ENCODE measurements at regions of chr7 and their contacts with region 1.

Region 1: GRCh38 chr7:92528188-92528957 is at the starts of genes PEX1 and RBM48:
- DNase-seq: peak; percentile 79 to 98 (median 96)
- ATAC-seq: peak; percentile 96
- H3K4me3 ChIP-seq: peak within 1 kb of the TSS; percentile 95
- H3K4me3 Mint-ChIP-seq: peak within 1 kb of the TSS; percentile 86 to 96 (median 90)
- H3K27ac ChIP-seq: peak within 1 kb of the TSS; percentile 91
- H3K27ac Mint-ChIP-seq: peak within 1 kb of the TSS; percentile 91 to 100 (median 95)
- H3K4me1 ChIP-seq: peaks cover 13 to 23% of the 10 kb centered on the region in 2 donors
- H3K4me1 Mint-ChIP-seq: peaks cover 24 to 67% (median 52%) of the 10 kb centered on the region in 7 donors
- H3K27me3 ChIP-seq: no peaks in the 10 kb centered on the region
- H3K27me3 Mint-ChIP-seq: peaks cover 0 to 2% (median 0%) of the 10 kb centered on the region in 5 donors
- total RNA-seq, gene PEX1: 18.6 to 43.3 (median 25.6) TPM
- total RNA-seq, gene RBM48: 16.9 to 42.7 (median 37.8) TPM

Region 2: DNA sequence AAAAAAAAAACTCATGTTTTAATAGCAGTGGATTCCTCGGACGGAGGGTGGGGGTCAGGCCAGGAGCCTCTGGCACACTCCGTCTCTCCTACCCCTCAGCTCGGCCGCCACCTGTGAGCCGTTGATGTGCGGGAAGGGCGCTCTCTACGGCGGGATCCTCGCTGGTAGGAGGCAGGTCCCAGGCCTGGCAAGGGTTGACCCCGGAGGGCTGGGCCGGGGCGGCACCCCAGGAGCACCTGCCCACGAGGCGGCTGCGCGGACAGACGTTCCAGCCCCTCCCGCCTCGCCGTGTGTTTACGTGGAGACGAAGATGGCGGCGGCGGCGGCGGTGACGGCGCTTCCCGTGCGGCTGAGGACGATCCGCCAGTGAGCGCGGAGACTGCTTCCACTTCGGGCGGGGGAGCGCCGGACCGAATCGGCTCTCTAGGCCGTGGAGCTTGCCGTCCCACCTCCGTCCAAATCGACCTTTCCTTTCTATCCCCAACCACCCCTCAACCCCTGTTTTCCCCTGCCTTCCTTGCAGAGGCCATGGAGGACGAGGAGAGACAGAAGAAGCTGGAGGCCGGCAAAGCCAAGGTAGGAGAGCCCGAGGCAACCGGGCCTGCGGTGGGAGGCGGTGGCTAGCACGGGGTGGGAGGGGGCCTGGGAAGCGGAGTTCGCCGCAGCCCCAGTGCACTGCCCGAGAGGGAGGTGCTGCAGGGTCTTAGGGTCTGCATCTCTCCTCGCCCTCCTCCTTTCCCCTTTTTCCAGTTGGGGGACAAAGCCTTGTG is 587.6 kb before region 1 on chr7 and contains the start of gene AKAP9:
- CTCF ChIA-PET with region 1: no interaction called
- POLR2A ChIA-PET with region 1: no interaction called
- intact Hi-C with region 1: loop called (anchors 1 kb)
- DNase-seq: peak; percentile 79 to 89 (median 88)
- ATAC-seq: peak; percentile 93
- H3K4me3 ChIP-seq: peak within 1 kb of the TSS; percentile 97
- H3K4me3 Mint-ChIP-seq: peak within 1 kb of the TSS; percentile 85 to 98 (median 92)
- H3K27ac ChIP-seq: peak within 1 kb of the TSS; percentile 93
- H3K27ac Mint-ChIP-seq: peak within 1 kb of the TSS; percentile 90 to 98 (median 95)
- H3K4me1 ChIP-seq: peaks cover 15 to 16% of the 10 kb centered on the region in 2 donors
- H3K4me1 Mint-ChIP-seq: peaks cover 28 to 54% (median 44%) of the 10 kb centered on the region in 7 donors
- H3K27me3 ChIP-seq: no peaks in the 10 kb centered on the region
- H3K27me3 Mint-ChIP-seq: peaks cover 0 to 2% (median 0%) of the 10 kb centered on the region in 5 donors
- total RNA-seq, gene AKAP9: 50.0 to 93.5 (median 66.1) TPM

Region 3: GRCh38 chr7:92447345-92448204 is 80.8 kb before region 1 on chr7 and contains the start of gene GATAD1:
- CTCF ChIA-PET with region 1: interaction called, 8 read pairs
- POLR2A ChIA-PET with region 1: interaction called, 27 read pairs
- intact Hi-C with region 1: loop called (anchors 1 kb)
- DNase-seq: peak in 7 of 9 donors; percentile 64 to 87 (median 84)
- ATAC-seq: peak; percentile 89
- H3K4me3 ChIP-seq: peak within 1 kb of the TSS; percentile 63
- H3K4me3 Mint-ChIP-seq: peak within 1 kb of the TSS; percentile 81 to 97 (median 93)
- H3K27ac ChIP-seq: peak within 1 kb of the TSS; percentile 95
- H3K27ac Mint-ChIP-seq: peak within 1 kb of the TSS; percentile 95 to 99 (median 98)
- H3K4me1 ChIP-seq: peaks cover 9 to 14% of the 10 kb centered on the region in 2 donors
- H3K4me1 Mint-ChIP-seq: peaks cover 6 to 38% (median 17%) of the 10 kb centered on the region in 7 donors
- H3K27me3 ChIP-seq: no peaks in the 10 kb centered on the region
- H3K27me3 Mint-ChIP-seq: peaks cover 0 to 3% (median 0%) of the 10 kb centered on the region in 5 donors
- total RNA-seq, gene GATAD1: 16.4 to 34.7 (median 22.7) TPM

Region 4: DNA sequence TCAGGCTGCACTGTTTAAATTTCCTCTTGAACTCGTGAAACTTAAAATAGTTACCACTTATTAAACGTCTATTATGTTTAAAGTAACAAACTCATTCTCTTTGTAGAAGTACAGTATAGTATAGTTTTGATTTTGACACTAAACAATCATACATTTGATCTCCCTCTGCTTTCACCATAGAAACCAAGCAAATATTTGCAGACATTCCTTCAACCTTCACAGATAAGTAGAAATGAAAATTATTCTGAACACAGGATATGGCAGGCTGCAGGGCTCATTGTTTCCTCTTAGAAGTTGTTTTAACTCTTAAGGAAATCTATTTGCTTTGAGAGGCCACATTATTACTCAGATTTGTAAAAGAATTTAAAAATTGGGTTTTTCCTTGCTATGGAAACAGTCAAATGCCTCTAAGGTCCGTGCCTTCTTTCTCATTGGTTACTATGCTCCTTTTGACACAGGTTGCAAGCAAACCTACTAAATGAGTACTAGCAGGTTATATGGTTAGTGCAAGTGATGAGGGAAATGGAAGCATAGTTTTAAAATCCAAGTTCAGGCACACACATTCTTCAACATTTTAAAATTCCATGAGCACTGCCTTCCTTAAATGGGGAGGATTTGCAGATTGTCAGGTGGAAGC is 154.6 kb after region 1 on chr7:
- CTCF ChIA-PET with region 1: no interaction called
- POLR2A ChIA-PET with region 1: no interaction called
- intact Hi-C with region 1: loop called (anchors 1 to 5 kb)
- DNase-seq: peak in 7 of 9 donors; percentile 20 to 62 (median 46)
- ATAC-seq: peak; percentile 70
- H3K4me3 ChIP-seq: no peak overlapping the region
- H3K4me3 Mint-ChIP-seq: peak overlapping the region; percentile 22 to 66 (median 58)
- H3K27ac ChIP-seq: peak overlapping the region; percentile 70
- H3K27ac Mint-ChIP-seq: peak overlapping the region; percentile 27 to 87 (median 81)
- H3K4me1 ChIP-seq: peaks cover 32 to 54% of the 10 kb centered on the region in 2 donors
- H3K4me1 Mint-ChIP-seq: peaks cover 51 to 89% (median 86%) of the 10 kb centered on the region in 7 donors
- H3K27me3 ChIP-seq: no peaks in the 10 kb centered on the region
- H3K27me3 Mint-ChIP-seq: no peaks in the 10 kb centered on the region

Region 5: GRCh38 chr7:92727755-92728154 is 199.4 kb after region 1 on chr7:
- CTCF ChIA-PET with region 1: no interaction called
- POLR2A ChIA-PET with region 1: no interaction called
- intact Hi-C with region 1: no loop called
- DNase-seq: no peak
- ATAC-seq: no peak
- H3K4me3 ChIP-seq: no peak overlapping the region
- H3K4me3 Mint-ChIP-seq: no peak overlapping the region
- H3K27ac ChIP-seq: no peak overlapping the region
- H3K27ac Mint-ChIP-seq: no peak overlapping the region
- H3K4me1 ChIP-seq: no peaks in the 10 kb centered on the region
- H3K4me1 Mint-ChIP-seq: peaks cover 13 to 72% (median 20%) of the 10 kb centered on the region in 7 donors
- H3K27me3 ChIP-seq: no peaks in the 10 kb centered on the region
- H3K27me3 Mint-ChIP-seq: no peaks in the 10 kb centered on the region

Region 6: GRCh38 chr7:92797693-92798092 is 269.3 kb after region 1 on chr7:
- CTCF ChIA-PET with region 1: no interaction called
- POLR2A ChIA-PET with region 1: no interaction called
- intact Hi-C with region 1: no loop called
- DNase-seq: peak in 1 of 9 donors; percentile 50
- ATAC-seq: no peak
- H3K4me3 ChIP-seq: no peak overlapping the region
- H3K4me3 Mint-ChIP-seq: no peak overlapping the region
- H3K27ac ChIP-seq: no peak overlapping the region
- H3K27ac Mint-ChIP-seq: no peak overlapping the region
- H3K4me1 ChIP-seq: peaks cover 0 to 3% of the 10 kb centered on the region in 2 donors
- H3K4me1 Mint-ChIP-seq: peaks cover 0 to 38% (median 19%) of the 10 kb centered on the region in 7 donors
- H3K27me3 ChIP-seq: no peaks in the 10 kb centered on the region
- H3K27me3 Mint-ChIP-seq: no peaks in the 10 kb centered on the region

Region 7: DNA sequence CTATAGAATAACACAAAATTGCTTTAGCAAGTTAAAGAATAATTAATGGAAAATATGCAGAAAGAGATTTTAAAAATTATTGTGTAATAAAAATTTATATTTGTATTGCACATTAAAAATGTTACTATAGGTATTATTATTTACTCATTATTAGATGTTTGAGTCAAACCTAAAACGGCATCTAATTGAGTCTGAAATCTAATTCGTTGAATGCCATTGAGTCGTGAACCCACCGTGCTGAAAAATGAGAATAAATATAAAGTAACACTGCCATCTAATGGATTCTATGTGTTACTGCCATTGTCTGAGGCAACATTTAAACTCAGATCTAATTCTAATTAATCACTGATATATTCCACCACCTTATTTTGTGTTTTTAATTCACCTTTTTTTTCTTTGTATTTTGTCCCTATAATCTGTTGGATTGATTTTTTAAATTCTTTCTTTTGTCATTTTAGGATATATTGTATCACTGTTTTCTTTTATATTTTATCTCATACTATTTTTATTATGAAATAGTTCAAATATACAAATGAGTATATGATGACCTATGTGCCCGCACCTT is 527.3 kb after region 1 on chr7:
- CTCF ChIA-PET with region 1: no interaction called
- POLR2A ChIA-PET with region 1: no interaction called
- intact Hi-C with region 1: loop called in 1 of 2 experiments (anchors 1 kb)
- DNase-seq: peak in 6 of 9 donors; percentile 14 to 57 (median 41)
- ATAC-seq: peak; percentile 77
- H3K4me3 ChIP-seq: no peak overlapping the region
- H3K4me3 Mint-ChIP-seq: no peak overlapping the region
- H3K27ac ChIP-seq: no peak overlapping the region
- H3K27ac Mint-ChIP-seq: no peak overlapping the region
- H3K4me1 ChIP-seq: no peaks in the 10 kb centered on the region
- H3K4me1 Mint-ChIP-seq: peaks cover 0 to 16% (median 7%) of the 10 kb centered on the region in 7 donors
- H3K27me3 ChIP-seq: no peaks in the 10 kb centered on the region
- H3K27me3 Mint-ChIP-seq: peaks cover 0 to 12% (median 6%) of the 10 kb centered on the region in 5 donors

Region 8: GRCh38 chr7:94004024-94004951 is 1475.9 kb after region 1 on chr7 and contains the start of gene BET1:
- CTCF ChIA-PET with region 1: no interaction called
- POLR2A ChIA-PET with region 1: no interaction called
- intact Hi-C with region 1: loop called (anchors 1 kb)
- DNase-seq: peak; percentile 87 to 96 (median 92)
- ATAC-seq: peak; percentile 98
- H3K4me3 ChIP-seq: peak within 1 kb of the TSS; percentile 75
- H3K4me3 Mint-ChIP-seq: peak within 1 kb of the TSS; percentile 88 to 100 (median 99)
- H3K27ac ChIP-seq: peak within 1 kb of the TSS; percentile 91
- H3K27ac Mint-ChIP-seq: peak within 1 kb of the TSS; percentile 95 to 100 (median 99)
- H3K4me1 ChIP-seq: peaks cover 3 to 17% of the 10 kb centered on the region in 2 donors
- H3K4me1 Mint-ChIP-seq: peaks cover 22 to 56% (median 51%) of the 10 kb centered on the region in 7 donors
- H3K27me3 ChIP-seq: no peaks in the 10 kb centered on the region
- H3K27me3 Mint-ChIP-seq: peaks cover 0 to 28% (median 11%) of the 10 kb centered on the region in 5 donors
- total RNA-seq, gene BET1: 9.9 to 37.6 (median 25.2) TPM

Measured in naive thymus-derived CD4-positive, alpha-beta T cell (primary cell).